CD4-positive, alpha-beta T cell (primary cell): ENCODE measurements at regions of chrX and their contacts with region 1.

Region 1: GRCh38 chrX:49191033-49191871 is 5.1 kb upstream of the PRICKLE3 start:
- DNase-seq: peak; percentile 64 to 97 (median 79)
- ATAC-seq: peak; percentile 88
- H3K4me3 ChIP-seq: peak overlapping the region; percentile 74
- H3K4me3 Mint-ChIP-seq: peak overlapping the region; percentile 90
- H3K27ac ChIP-seq: peak overlapping the region; percentile 70 to 72
- H3K27ac Mint-ChIP-seq: peak overlapping the region; percentile 67
- H3K4me1 ChIP-seq: peaks cover 27% of the 10 kb centered on the region
- H3K4me1 Mint-ChIP-seq: peaks cover 28% of the 10 kb centered on the region
- H3K27me3 ChIP-seq: no peaks in the 10 kb centered on the region
- H3K27me3 Mint-ChIP-seq: no peaks in the 10 kb centered on the region
- CTCF ChIP-seq: no peak

Region 2: DNA sequence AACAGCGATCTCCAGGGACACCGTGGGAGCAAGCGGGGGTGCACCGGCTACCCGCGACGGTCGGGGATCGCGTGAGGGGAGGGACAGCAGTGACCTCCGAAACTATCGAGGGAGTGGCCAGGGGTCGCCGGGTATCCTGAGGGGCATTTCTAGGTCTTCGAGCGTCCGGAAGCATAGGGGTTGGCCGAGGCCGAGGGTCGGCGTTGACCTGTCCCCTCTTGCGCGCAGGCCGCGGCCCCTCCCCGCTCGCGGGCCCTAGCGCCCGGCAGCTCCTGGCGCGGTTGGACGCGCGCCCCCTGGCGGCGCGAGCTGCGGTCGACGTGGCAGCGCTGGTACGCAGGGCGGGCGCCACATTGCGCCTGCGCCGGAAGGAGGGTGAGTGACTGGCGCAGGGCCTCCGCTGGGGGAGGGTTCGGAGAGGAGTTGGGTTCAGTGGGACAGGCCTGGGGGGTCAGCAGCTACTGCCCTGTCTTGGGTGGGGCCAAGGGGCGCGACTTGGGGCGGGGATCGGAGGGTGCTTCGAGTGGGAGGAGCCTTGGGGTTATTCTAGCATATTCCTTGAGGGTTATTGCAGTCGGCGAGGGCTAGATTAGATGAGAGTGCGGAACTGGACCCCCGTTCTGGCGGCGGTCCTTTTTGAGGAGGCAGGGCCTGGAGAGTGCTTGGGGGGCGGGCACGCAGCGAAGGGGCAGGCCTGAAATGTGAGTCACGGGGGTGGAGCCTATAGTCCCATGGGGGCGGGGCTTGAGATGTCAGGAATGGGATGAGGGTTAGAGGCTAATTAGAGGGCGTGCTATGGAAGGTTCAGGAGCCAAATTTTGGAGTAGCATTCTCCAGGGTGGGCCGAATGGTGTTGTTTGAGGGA is 27.5 kb before region 1 on chrX:
- CTCF ChIA-PET with region 1: interaction called, 6 read pairs
- POLR2A ChIA-PET with region 1: interaction called, 50 read pairs
- intact Hi-C with region 1: no loop called
- DNase-seq: peak; percentile 61 to 92 (median 78)
- ATAC-seq: peak; percentile 58
- H3K4me3 ChIP-seq: peak overlapping the region; percentile 50
- H3K4me3 Mint-ChIP-seq: peak overlapping the region; percentile 86
- H3K27ac ChIP-seq: peak overlapping the region; percentile 65 to 72
- H3K27ac Mint-ChIP-seq: peak overlapping the region; percentile 87
- H3K4me1 ChIP-seq: peaks cover 52% of the 10 kb centered on the region
- H3K4me1 Mint-ChIP-seq: peaks cover 28% of the 10 kb centered on the region
- H3K27me3 ChIP-seq: no peaks in the 10 kb centered on the region
- H3K27me3 Mint-ChIP-seq: no peaks in the 10 kb centered on the region
- CTCF ChIP-seq: peak; percentile 35

Region 3: DNA sequence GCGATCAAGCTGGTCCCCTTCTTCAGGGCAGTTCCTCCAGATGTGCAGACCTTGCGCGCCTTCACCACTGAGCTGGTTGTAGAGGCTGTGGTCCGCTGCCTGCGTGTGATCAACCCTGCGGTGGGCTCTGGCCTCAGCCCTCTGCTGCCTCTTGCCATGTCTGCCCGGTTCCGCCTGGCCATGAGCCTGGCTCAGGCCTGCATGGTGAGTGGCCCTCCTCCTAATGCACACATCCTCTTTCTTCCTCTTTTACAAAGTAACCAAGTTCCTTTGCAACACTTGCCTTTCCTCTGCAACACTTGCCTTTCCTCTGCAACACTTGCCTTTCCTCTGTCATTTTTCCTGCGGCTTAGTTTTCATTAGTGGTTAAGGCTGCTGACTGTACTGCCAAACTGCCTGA is 45.8 kb after region 1 on chrX:
- CTCF ChIA-PET with region 1: no interaction called
- POLR2A ChIA-PET with region 1: interaction called, 4 read pairs
- intact Hi-C with region 1: loop called in 1 of 2 experiments (anchors 1 kb)
- DNase-seq: peak in 2 of 14 experiments; percentile 27 to 35
- ATAC-seq: no peak
- H3K4me3 ChIP-seq: no peak overlapping the region
- H3K4me3 Mint-ChIP-seq: peak overlapping the region; percentile 80
- H3K27ac ChIP-seq: no peak overlapping the region
- H3K27ac Mint-ChIP-seq: peak overlapping the region; percentile 91
- H3K4me1 ChIP-seq: peaks cover 35% of the 10 kb centered on the region
- H3K4me1 Mint-ChIP-seq: peaks cover 34% of the 10 kb centered on the region
- H3K27me3 ChIP-seq: no peaks in the 10 kb centered on the region
- H3K27me3 Mint-ChIP-seq: no peaks in the 10 kb centered on the region
- CTCF ChIP-seq: no peak

Region 4: GRCh38 chrX:49637686-49638085 is 446.4 kb after region 1 on chrX:
- CTCF ChIA-PET with region 1: no interaction called
- POLR2A ChIA-PET with region 1: no interaction called
- intact Hi-C with region 1: loop called in 1 of 2 experiments (anchors 2 kb)
- DNase-seq: peak in 3 of 14 experiments; percentile 8 to 18 (median 11)
- ATAC-seq: no peak
- H3K4me3 ChIP-seq: no peak overlapping the region
- H3K4me3 Mint-ChIP-seq: no peak overlapping the region
- H3K27ac ChIP-seq: no peak overlapping the region
- H3K27ac Mint-ChIP-seq: no peak overlapping the region
- H3K4me1 ChIP-seq: no peaks in the 10 kb centered on the region
- H3K4me1 Mint-ChIP-seq: no peaks in the 10 kb centered on the region
- H3K27me3 ChIP-seq: no peaks in the 10 kb centered on the region
- H3K27me3 Mint-ChIP-seq: no peaks in the 10 kb centered on the region
- CTCF ChIP-seq: no peak